PC-3 (cell line): ENCODE measurements at regions of chr1 and their contacts with region 1.

Region 1: DNA sequence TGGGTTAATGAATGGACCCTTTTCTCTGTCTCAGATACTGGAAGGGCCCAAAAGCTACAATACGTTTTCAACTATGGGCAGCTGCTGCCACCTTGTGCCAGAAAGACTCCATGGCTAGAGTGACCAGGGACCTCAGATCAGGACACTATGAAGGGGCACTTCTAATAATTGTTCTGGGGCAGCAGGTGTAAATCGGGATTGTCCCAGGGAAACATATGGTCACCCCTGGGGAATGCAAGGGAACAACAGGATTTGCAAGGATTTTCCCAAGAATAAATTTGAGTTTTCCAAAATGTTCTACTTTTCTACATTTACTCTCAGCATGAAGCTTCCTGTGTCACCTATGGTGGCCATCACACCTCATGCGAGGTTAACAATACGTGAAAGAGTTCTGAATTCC is 12.0 kb upstream of the FCAMR start:
- DNase-seq: peak; percentile 92
- ATAC-seq: peak; percentile 95
- H3K4me3 ChIP-seq: no peak overlapping the region
- H3K27ac ChIP-seq: no peak overlapping the region
- H3K4me1 ChIP-seq: no peaks in the 10 kb centered on the region; the same call in 1 of the 2 replicates
- H3K27me3 ChIP-seq: no peaks in the 10 kb centered on the region
- CTCF ChIP-seq: peak; percentile 99

Region 2: DNA sequence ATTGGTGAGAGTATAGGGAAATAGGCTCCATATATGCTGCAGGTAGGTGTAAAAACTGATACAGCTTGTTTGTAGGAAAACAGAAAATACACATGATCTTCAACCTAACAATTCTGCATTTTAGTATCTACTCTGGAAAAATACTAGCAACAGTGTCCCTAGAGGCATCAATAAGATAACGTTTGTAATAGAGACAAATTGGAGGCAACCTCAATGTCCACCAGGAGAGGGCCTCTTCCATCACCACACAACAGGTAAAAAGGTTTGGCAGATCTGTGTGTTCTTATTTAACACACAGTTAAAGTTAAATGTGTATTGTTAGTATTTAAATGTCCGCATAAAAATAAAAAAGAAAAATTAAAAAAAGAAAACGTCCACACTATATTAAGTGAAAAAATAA is 375.4 kb before region 1 on chr1:
- CTCF ChIA-PET with region 1: no interaction called
- POLR2A ChIA-PET with region 1: no interaction called
- intact Hi-C with region 1: loop called (anchors 1 kb)
- DNase-seq: peak; percentile 84
- ATAC-seq: peak; percentile 86
- H3K4me3 ChIP-seq: no peak overlapping the region
- H3K27ac ChIP-seq: no peak overlapping the region
- H3K4me1 ChIP-seq: peaks cover 7% of the 10 kb centered on the region
- H3K27me3 ChIP-seq: no peaks in the 10 kb centered on the region
- CTCF ChIP-seq: peak; percentile 97

Region 3: DNA sequence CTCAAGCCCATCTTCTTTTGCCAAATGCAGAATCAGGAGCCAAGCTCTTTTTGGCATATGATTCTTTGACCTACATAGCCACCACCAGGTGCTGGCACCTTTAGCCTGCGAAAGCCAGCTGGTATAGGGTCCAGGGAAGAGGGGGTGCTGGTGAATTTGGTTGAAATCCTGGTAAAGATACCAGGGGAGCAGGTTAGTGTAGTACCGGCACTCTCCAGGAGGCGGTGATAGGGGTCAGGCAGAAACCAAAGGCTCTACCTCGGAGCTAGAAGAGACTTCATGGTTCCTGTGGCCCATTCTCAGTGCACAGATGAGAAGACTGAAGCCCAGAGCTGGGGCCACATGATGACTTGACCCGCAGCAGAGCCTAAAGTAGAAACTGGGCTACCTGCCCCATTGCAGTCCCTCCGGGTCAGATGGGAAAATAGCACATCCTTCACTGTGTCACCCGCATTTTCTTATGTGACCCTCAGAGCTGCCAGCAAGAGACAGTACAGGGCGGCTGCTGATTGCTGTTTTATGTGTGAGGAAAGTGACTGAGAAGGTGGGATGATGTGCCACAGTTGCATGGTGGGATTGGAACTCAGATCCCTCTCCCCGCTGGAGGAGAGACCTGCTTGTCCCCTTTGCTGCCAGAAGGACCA is 247.6 kb before region 1 on chr1:
- CTCF ChIA-PET with region 1: interaction called, 5 read pairs
- POLR2A ChIA-PET with region 1: no interaction called
- intact Hi-C with region 1: loop called (anchors 2 kb)
- DNase-seq: peak; percentile 81
- ATAC-seq: peak; percentile 69
- H3K4me3 ChIP-seq: no peak overlapping the region
- H3K27ac ChIP-seq: no peak overlapping the region
- H3K4me1 ChIP-seq: peaks cover 6% of the 10 kb centered on the region
- H3K27me3 ChIP-seq: no peaks in the 10 kb centered on the region
- CTCF ChIP-seq: peak; percentile 95

Region 4: GRCh38 chr1:206912445-206913095 is 69.6 kb before region 1 on chr1:
- CTCF ChIA-PET with region 1: interaction called, 45 read pairs
- POLR2A ChIA-PET with region 1: no interaction called
- intact Hi-C with region 1: loop called (anchors 1 kb)
- DNase-seq: peak; percentile 98
- ATAC-seq: peak; percentile 32
- H3K4me3 ChIP-seq: no peak overlapping the region
- H3K27ac ChIP-seq: peak overlapping the region; percentile 13
- H3K4me1 ChIP-seq: peaks cover 37% of the 10 kb centered on the region
- H3K27me3 ChIP-seq: no peaks in the 10 kb centered on the region
- CTCF ChIP-seq: peak; percentile 99

Region 5: DNA sequence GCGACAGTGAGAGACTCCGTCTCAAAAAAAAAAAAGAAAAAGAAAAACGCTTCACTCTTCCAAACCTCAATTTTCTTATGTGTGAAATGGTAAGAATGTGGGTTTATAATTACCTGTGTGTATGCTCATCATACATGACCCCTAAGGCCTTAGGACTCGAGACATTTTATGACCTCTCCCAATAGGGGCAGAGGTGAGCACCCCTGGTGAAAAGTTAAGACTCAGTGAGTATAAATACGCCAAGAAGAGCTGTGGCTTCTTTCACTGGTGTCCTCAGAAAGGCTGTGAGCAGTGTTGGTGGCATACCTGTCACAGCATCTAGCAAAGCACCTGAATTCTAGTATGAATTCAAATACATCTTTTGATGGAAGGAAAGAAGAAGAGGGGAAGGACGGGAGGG is 52.7 kb before region 1 on chr1:
- CTCF ChIA-PET with region 1: no interaction called
- POLR2A ChIA-PET with region 1: no interaction called
- intact Hi-C with region 1: no loop called
- DNase-seq: no peak
- ATAC-seq: no peak
- H3K4me3 ChIP-seq: no peak overlapping the region
- H3K27ac ChIP-seq: no peak overlapping the region
- H3K4me1 ChIP-seq: peaks cover 15% of the 10 kb centered on the region
- H3K27me3 ChIP-seq: no peaks in the 10 kb centered on the region
- CTCF ChIP-seq: no peak

Region 6: GRCh38 chr1:207017615-207018559 is 35.7 kb after region 1 on chr1:
- CTCF ChIA-PET with region 1: interaction called, 22 read pairs
- POLR2A ChIA-PET with region 1: no interaction called
- intact Hi-C with region 1: loop called (anchors 1 kb)
- DNase-seq: peak; percentile 97
- ATAC-seq: peak; percentile 50
- H3K4me3 ChIP-seq: no peak overlapping the region
- H3K27ac ChIP-seq: peak overlapping the region; percentile 95
- H3K4me1 ChIP-seq: peaks cover 55% of the 10 kb centered on the region
- H3K27me3 ChIP-seq: no peaks in the 10 kb centered on the region
- CTCF ChIP-seq: no peak

Region 7: DNA sequence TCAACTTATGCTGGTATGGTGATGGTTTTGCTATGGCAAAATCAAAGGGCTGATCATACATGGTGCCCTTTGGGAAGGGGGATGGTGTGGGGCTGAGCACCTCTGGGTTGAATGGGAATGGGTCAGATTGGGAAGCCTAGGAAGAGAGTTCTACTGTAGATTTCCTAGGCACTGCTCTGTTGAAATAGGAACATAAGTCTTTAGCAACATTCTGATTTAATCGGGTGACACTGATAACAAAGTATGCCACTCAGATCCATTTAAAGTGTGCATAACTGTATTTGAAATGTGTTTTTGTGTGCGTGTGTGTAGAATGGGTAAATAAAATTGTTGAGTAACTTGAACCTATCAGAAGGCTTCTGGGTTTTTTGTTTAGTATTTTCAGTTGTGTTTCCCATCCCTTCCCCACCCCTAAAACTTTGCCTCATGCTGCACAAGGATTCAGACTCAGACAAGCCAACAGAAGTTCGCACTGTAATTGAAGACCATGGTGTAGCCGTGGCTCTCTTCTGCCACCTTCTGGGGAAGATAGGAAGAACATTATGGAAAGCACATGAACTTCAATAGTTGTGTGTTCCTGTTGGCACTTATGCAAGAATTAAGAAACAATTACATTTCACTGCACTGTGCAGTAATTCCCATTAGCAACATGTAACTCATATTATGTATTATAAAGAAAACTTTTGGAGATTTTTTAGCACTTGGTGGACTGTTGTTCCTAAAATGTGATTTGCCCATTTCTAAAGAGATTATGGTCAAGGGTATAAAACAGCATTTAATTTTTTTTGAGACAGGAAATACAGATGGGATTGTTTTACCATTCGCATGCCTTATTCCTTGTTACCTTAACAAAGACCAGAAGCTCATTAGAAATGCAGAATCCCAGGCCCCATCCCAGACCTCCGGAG is 95.5 kb after region 1 on chr1:
- CTCF ChIA-PET with region 1: no interaction called
- POLR2A ChIA-PET with region 1: no interaction called
- intact Hi-C with region 1: loop called (anchors 1 kb)
- DNase-seq: peak; percentile 98
- ATAC-seq: peak; percentile 68
- H3K4me3 ChIP-seq: no peak overlapping the region
- H3K27ac ChIP-seq: peak overlapping the region; percentile 3; the same call in 1 of the 2 replicates
- H3K4me1 ChIP-seq: peaks cover 37% of the 10 kb centered on the region
- H3K27me3 ChIP-seq: no peaks in the 10 kb centered on the region
- CTCF ChIP-seq: peak; percentile 99